T-cell (primary cell): ENCODE measurements at regions of chr3 and their contacts with region 1.

Region 1: GRCh38 chr3:186979837-186980236 is 49.5 kb downstream of the ST6GAL1 start:
- DNase-seq: no peak
- ATAC-seq: no peak
- H3K4me3 ChIP-seq: no peak overlapping the region
- H3K4me3 Mint-ChIP-seq: no peak overlapping the region
- H3K27ac ChIP-seq: no peak overlapping the region
- H3K27ac Mint-ChIP-seq: no peak overlapping the region
- H3K4me1 ChIP-seq: no peaks in the 10 kb centered on the region
- H3K4me1 Mint-ChIP-seq: peaks cover 23 to 51% (median 42%) of the 10 kb centered on the region in 3 donors
- H3K27me3 ChIP-seq: no peaks in the 10 kb centered on the region
- H3K27me3 Mint-ChIP-seq: no peaks in the 10 kb centered on the region

Region 2: DNA sequence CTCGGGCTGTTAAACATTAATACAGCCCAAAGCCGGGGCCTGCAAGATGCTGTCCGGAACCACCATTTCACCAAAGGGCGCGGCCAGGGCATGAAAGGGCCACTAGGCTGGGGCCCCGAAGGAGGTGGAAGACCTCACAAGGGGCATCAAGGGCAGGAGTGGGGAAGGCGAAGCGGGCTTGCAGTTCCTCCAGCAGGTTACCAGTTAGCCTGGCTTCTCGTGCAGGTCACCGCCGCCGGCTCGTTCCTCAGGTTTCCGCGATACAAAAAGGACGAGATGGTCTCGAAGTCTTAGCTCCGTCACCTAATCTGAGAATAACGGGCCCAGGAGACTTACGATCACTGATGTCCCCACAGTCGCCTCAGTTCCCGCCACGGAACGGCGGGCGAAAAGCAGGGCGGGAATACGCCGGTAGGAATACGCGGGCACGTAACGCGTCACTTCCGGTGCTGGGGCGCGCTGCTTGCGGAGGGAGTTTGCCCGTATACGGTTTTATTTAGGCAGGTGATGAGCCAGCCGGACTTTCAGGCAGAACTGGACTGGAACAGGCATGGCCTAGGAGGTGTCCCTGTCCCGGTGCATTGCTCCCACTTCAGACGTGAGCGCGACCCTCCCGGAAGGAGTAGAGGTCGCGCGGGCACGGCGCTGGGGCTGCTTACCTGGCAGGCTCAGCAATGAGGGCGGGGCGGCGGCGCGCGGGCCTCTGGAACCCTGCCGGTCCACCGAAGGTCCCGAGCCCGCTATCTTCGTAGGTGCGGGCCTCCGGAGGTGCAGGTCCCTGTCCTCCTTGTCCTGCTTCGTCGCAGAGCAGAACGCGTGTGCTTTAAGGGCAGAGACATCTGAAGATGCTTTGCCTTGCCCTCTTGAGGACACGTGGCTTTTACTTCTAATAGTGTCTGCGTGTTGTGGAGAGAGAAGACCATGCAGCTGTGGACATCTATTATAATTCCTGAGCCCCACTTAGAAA is 173.5 kb before region 1 on chr3 and contains the start of gene RFC4:
- CTCF ChIA-PET with region 1: no interaction called
- POLR2A ChIA-PET with region 1: interaction called in 1 of 2 experiments, 11 read pairs
- DNase-seq: peak; percentile 65 to 90 (median 81)
- ATAC-seq: peak; percentile 89 to 93 (median 92)
- H3K4me3 ChIP-seq: peak within 1 kb of the TSS; percentile 98 to 99
- H3K4me3 Mint-ChIP-seq: peak within 1 kb of the TSS; percentile 89 to 95 (median 95)
- H3K27ac ChIP-seq: peak within 1 kb of the TSS; percentile 90
- H3K27ac Mint-ChIP-seq: peak within 1 kb of the TSS; percentile 92 to 95
- H3K4me1 ChIP-seq: peaks cover 12 to 20% of the 10 kb centered on the region in 2 experiments
- H3K4me1 Mint-ChIP-seq: peaks cover 8 to 27% (median 24%) of the 10 kb centered on the region in 3 donors
- H3K27me3 ChIP-seq: no peaks in the 10 kb centered on the region
- H3K27me3 Mint-ChIP-seq: no peaks in the 10 kb centered on the region
- total RNA-seq, gene RFC4: 13.4 to 21.0 (median 19.2) TPM